OCI-LY7 (cell line): ENCODE measurements at regions of chrX and their contacts with region 1.

Region 1: DNA sequence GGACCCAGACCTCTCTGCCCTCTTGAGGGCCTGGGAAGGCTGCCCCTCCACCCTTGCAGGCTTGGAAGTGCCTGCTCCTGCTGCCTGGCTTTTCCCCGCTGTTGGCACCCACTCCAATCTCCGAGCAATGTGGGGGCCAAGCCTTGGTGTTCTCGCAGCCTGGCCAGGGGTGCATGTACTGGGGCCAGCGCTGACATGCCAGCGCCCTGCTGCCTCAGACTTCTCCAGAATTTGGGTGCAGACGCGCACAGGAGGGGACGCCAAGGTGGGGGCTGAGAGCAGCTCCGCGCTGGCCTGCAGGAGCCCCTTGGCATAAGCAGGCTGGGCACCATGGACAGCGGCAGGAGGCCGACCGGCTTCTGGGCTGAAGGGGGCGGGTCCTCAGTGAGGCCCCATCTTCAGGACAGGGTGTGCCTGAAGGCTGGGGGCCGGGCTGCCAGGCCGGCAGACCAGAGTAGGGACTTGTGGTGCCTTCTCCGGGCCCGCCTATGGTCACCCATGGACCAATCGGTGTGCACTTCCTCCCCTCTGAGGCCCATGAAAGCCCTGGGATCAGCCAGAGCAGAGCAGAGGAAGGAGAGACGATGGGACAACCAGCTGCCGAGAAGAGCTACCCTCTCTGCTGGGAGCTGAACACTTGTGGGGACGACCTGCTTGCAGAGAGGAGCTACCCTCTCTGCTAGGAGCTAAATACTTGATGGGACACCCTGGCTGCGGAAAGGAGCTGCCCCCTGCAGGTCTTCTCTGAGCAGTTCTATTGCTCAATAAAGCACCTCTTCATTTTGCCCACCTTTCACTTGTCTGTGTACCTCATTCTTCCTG is 118.3 kb downstream of the DNAAF6 start:
- DNase-seq: peak; percentile 14
- H3K4me3 ChIP-seq: no peak overlapping the region
- H3K27ac ChIP-seq: no peak overlapping the region
- H3K4me1 ChIP-seq: no peaks in the 10 kb centered on the region
- CTCF ChIP-seq: peak; percentile 41

Region 2: DNA sequence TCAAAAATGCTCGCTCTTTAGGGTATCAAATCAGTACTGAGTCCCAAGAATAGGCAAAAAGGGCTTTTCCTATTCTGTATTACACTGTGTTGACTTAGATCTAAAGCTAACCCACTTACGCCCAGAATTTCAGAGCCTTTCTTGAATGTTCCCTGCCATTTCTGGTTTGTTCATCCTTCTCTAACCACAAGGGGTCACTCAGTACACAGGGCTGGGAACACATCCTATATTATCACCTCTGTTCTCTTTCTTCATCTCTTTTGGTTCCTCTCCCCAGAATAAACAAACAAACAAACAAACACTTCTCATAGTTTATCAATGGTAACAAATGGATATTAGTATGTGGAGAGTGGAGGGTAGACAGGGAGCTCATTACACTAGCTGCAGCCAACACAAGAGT is 299.2 kb before region 1 on chrX:
- CTCF ChIA-PET with region 1: no interaction called
- POLR2A ChIA-PET with region 1: no interaction called
- intact Hi-C with region 1: loop called (anchors 10 kb)
- DNase-seq: peak; percentile 31
- H3K4me3 ChIP-seq: no peak overlapping the region
- H3K27ac ChIP-seq: no peak overlapping the region
- H3K4me1 ChIP-seq: no peaks in the 10 kb centered on the region
- CTCF ChIP-seq: peak; percentile 76